IMR-90 (cell line): ENCODE measurements at regions of chr9 and their contacts with region 1.

Region 1: GRCh38 chr9:34493972-34494535 is 28.7 kb downstream of the ENHO start:
- DNase-seq: peak; percentile 53
- ATAC-seq: peak; percentile 88
- H3K4me3 ChIP-seq: no peak overlapping the region
- H3K27ac ChIP-seq: no peak overlapping the region
- H3K4me1 ChIP-seq: no peaks in the 10 kb centered on the region
- H3K27me3 ChIP-seq: peaks cover 29% of the 10 kb centered on the region
- CTCF ChIP-seq: no peak
- POLR2A ChIP-seq: no peak
- RAD21 ChIP-seq: no peak

Region 2: DNA sequence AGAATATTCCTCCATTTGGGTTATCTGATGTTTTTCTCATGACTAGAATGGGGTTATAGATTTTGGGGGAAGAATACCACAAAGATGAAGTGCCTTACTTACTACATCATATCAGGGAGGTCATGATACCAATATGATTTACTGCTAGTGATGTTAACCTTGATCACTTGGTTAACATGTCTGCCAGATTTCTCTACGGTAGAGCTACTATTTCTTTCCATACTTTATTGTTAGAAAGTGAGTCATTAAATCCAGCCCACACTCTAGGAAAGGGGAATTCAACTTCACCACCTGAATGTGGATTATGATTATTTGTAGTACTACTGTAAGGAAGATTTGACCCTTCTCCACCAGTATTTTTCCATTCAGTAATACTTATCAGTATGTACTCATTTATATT is 612.4 kb before region 1 on chr9:
- CTCF ChIA-PET with region 1: no interaction called
- POLR2A ChIA-PET with region 1: no interaction called
- dilution Hi-C with region 1: no loop called
- in situ Hi-C with region 1: no loop called
- intact Hi-C with region 1: no loop called
- DNase-seq: peak; percentile 57
- ATAC-seq: no peak; the same call in 1 of the 2 replicates
- H3K4me3 ChIP-seq: no peak overlapping the region
- H3K27ac ChIP-seq: no peak overlapping the region
- H3K4me1 ChIP-seq: peaks cover 12% of the 10 kb centered on the region
- H3K27me3 ChIP-seq: no peaks in the 10 kb centered on the region
- CTCF ChIP-seq: no peak
- POLR2A ChIP-seq: no peak
- RAD21 ChIP-seq: no peak

Region 3: GRCh38 chr9:34403554-34404380 is 90.3 kb before region 1 on chr9:
- CTCF ChIA-PET with region 1: interaction called, 5 read pairs
- POLR2A ChIA-PET with region 1: no interaction called
- dilution Hi-C with region 1: no loop called
- in situ Hi-C with region 1: loop called (anchors 5 kb)
- intact Hi-C with region 1: no loop called
- DNase-seq: peak; percentile 68
- ATAC-seq: peak; percentile 90
- H3K4me3 ChIP-seq: no peak overlapping the region
- H3K27ac ChIP-seq: no peak overlapping the region
- H3K4me1 ChIP-seq: no peaks in the 10 kb centered on the region; the same call in 1 of the 2 replicates
- H3K27me3 ChIP-seq: no peaks in the 10 kb centered on the region
- CTCF ChIP-seq: peak; percentile 97
- POLR2A ChIP-seq: no peak
- RAD21 ChIP-seq: peak; percentile 84

Region 4: DNA sequence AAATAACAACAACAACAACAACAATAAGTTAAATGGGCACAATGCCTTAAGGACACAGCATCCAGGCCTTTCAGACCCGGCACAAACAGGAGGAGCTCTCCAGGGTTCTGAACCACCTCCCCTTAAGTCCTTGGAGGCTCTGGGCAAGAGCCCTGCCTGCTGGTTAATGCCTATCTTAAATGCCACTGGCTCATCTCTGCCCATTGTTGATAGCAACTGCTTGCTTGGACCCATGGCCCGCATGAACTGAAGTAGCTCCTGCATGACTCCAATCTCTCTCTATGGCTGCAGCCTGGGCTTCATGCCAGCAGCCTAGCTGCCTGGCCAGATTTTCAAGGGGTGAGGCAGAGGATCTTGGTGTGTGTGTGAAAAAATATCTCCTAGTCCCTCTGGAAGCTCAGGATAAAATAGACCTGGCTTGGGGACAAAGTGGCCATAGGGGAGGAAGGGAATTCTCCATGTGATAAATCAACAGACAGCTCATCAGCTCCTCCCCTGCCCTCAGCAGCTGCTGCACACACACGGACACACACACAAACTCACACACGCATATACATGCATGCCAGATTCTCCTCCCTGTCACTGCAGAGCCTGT is 63.1 kb before region 1 on chr9:
- CTCF ChIA-PET with region 1: no interaction called
- POLR2A ChIA-PET with region 1: no interaction called
- dilution Hi-C with region 1: no loop called
- in situ Hi-C with region 1: loop called (anchors 10 kb)
- intact Hi-C with region 1: loop called (anchors 1 kb)
- DNase-seq: peak; percentile 85
- ATAC-seq: peak; percentile 91
- H3K4me3 ChIP-seq: no peak overlapping the region
- H3K27ac ChIP-seq: no peak overlapping the region
- H3K4me1 ChIP-seq: peaks cover 4% of the 10 kb centered on the region
- H3K27me3 ChIP-seq: no peaks in the 10 kb centered on the region
- CTCF ChIP-seq: no peak
- POLR2A ChIP-seq: no peak
- RAD21 ChIP-seq: no peak

Region 5: GRCh38 chr9:34437006-34437925 is 56.8 kb before region 1 on chr9:
- CTCF ChIA-PET with region 1: no interaction called
- POLR2A ChIA-PET with region 1: no interaction called
- dilution Hi-C with region 1: no loop called
- in situ Hi-C with region 1: loop called (anchors 10 kb)
- intact Hi-C with region 1: no loop called
- DNase-seq: peak; percentile 79
- ATAC-seq: peak; percentile 92
- H3K4me3 ChIP-seq: no peak overlapping the region
- H3K27ac ChIP-seq: no peak overlapping the region
- H3K4me1 ChIP-seq: peaks cover 7% of the 10 kb centered on the region
- H3K27me3 ChIP-seq: no peaks in the 10 kb centered on the region
- CTCF ChIP-seq: peak; percentile 84
- POLR2A ChIP-seq: 0 out of 2 replicates have a peak, but pooled peaks have one; percentile 33
- RAD21 ChIP-seq: peak; percentile 88

Region 6: DNA sequence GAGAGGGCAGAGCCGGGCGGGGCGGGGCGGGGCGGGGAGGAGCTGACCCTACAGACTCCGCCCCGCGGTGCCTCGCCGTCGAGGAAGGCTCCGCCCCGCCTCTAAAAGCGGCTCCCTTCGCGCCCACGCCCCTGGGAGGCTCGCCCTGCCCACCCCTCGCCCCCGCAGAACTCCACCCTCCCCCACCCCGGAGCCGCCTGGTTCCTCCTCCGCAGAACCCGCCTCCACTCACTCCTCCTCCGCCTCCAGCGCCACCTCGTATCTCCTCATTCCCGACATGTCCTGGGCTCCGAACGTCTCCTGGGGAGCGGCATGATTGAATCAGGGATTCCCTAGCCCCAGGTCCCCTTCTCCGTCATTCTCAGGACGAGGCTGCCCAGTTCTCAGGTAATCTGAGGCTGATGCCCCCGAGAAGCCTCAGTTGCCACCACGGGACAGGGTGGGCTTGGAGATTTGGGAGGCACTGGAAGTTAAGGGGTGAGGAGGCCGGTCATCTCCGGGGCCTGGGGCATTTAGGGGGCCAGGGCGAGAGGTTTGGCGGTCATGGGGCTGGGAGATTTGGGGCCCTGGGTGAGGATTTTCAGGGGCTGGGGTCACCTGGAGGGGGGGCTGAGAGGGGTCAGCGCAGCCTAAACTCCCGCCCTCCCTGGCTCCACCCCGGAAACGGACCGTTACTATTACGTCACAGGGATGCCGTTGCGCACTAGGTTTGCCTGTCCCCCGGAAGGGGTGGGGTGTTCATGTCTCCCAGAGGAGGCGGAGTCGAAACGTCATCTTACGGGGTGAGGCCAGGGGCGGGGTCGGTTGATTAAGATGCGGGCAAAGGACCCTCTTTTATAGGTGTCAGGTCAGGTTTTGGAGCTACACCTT is 171.6 kb after region 1 on chr9:
- CTCF ChIA-PET with region 1: no interaction called
- POLR2A ChIA-PET with region 1: no interaction called
- dilution Hi-C with region 1: no loop called
- in situ Hi-C with region 1: no loop called
- intact Hi-C with region 1: no loop called
- DNase-seq: peak; percentile 95
- ATAC-seq: peak; percentile 91
- H3K4me3 ChIP-seq: peak overlapping the region; percentile 79
- H3K27ac ChIP-seq: peak overlapping the region; percentile 88
- H3K4me1 ChIP-seq: no peaks in the 10 kb centered on the region
- H3K27me3 ChIP-seq: no peaks in the 10 kb centered on the region
- CTCF ChIP-seq: no peak
- POLR2A ChIP-seq: peak; percentile 94
- RAD21 ChIP-seq: no peak

Region 7: DNA sequence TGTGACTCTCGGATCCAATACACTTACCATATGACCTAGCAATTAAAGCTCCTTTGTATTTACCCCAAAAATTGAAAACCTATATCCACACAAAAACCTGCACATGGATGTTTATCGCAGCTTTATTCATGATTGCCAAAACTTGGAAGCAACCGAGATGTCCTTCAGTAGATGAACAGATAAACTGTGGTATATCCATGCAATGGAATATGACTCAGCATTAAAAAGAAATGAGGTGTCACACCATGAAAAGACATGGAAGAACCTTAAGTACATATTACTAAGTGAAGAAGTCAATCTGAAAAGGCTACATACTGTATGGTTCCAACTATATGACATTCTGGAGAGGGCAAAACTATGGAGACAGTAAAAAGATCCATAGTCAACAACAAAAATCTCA is 382.0 kb after region 1 on chr9:
- CTCF ChIA-PET with region 1: no interaction called
- POLR2A ChIA-PET with region 1: no interaction called
- dilution Hi-C with region 1: no loop called
- in situ Hi-C with region 1: no loop called
- intact Hi-C with region 1: no loop called
- DNase-seq: no peak
- ATAC-seq: no peak
- H3K4me3 ChIP-seq: no peak overlapping the region
- H3K27ac ChIP-seq: no peak overlapping the region
- H3K4me1 ChIP-seq: no peaks in the 10 kb centered on the region
- H3K27me3 ChIP-seq: no peaks in the 10 kb centered on the region
- CTCF ChIP-seq: no peak
- POLR2A ChIP-seq: no peak
- RAD21 ChIP-seq: no peak